ENCODE measurements at regions of chr1 and their contacts with region 1.

Region 1: DNA sequence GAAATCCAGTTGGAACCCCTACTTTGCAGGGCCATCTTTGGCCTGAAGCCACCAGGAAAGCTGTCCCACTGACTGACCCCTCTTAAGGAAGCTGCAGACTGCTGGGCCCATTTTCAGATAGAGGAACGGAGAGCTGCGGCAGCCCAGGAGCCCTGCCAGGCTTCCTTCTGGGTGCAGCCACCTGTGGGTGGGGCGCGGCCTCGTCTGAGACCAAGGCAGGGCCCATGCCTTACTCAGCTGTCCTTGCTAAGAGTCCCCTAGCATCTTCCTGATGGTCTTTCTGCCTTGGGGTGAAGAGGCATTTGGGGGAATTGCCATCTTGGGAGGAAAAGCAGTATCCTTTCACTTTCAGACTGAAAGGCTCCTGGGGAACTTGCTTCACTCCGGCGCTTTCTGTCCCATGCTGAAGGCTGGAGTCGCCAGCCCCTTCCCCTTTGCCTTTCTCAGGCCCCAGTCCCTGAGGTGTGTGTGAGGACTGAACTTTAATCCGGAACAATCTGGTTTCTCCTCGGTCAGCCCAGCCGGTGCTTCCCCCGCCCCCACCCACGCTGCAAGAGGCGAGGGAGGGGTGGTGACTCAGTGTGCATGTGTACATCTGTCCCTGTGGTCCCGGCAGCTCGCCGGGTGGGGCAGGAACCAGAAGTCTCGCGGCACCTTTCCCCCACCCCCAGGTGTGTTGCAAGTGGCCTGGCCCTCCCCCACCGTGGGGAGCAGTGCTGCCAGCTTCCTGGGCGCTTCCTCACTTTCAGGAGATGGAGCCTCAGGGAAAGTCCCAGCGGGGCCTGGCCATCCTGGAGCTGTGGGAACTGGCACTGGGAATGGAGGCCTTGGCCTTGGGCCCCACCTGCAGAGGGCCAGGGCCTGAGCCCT is 5.1 kb downstream of the ZC3H12A start:
- DNase-seq: peak; percentile 79
- ATAC-seq: peak; percentile 50
- H3K4me3 ChIP-seq: peak overlapping the region; percentile 94 to 99 (median 98)
- H3K4me3 Mint-ChIP-seq: peak overlapping the region; percentile 100
- H3K27ac ChIP-seq: peak overlapping the region; percentile 96 to 97
- H3K27ac Mint-ChIP-seq: peak overlapping the region; percentile 98
- H3K4me1 ChIP-seq: peaks cover 32 to 66% of the 10 kb centered on the region in 2 donors
- H3K4me1 Mint-ChIP-seq: peaks cover 60% of the 10 kb centered on the region
- H3K27me3 ChIP-seq: no peaks in the 10 kb centered on the region
- H3K27me3 Mint-ChIP-seq: no peaks in the 10 kb centered on the region
- CTCF ChIP-seq: no peak

Region 2: DNA sequence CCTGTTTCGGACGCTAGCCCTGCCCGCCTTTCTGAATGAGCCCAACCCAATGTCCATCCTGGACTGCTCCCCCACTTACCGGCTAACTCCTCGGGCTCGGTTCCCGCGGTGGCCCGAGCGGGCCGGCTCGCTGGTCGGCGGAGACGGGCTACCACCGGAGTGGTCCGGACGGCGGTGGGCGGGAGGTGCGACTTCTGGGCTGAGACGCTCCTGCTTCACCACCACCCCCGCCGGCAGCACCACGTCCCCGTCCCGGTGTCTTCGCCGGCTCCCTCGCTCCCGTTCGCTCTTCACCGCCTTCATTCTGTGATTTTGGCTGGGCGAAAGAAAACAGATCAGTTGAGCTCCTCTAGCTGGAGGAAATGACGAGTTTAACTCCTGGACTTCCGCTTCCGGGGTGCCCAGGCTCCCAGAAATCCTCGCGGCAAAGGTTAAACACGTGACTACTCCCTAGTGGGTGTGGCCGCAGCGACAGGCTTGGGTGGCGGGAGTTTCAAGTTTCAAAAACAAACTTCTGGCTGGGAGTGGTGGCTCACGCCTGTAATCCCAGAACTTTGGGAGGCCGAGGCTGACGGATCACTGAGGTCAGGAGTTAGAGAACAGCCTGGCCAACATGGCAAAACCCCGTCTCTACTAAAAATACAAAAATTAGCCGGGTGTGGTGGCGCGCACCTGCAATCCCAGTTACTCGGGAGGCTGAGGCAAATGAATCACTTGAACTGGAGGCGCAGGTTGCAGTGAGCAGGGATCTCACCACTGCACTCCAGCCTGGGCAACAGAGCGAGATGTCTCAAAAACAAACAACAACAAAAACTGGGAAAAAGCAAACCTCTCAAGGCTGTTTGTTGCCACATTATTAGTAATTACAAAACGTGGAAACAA is 74.7 kb after region 1 on chr1 and contains the start of gene SNIP1:
- CTCF ChIA-PET with region 1: no interaction called
- POLR2A ChIA-PET with region 1: no interaction called
- intact Hi-C with region 1: loop called (anchors 1 kb)
- DNase-seq: peak; percentile 94
- ATAC-seq: peak; percentile 98
- H3K4me3 ChIP-seq: peak within 1 kb of the TSS; percentile 75 to 99 (median 93)
- H3K4me3 Mint-ChIP-seq: peak within 1 kb of the TSS; percentile 98
- H3K27ac ChIP-seq: peak within 1 kb of the TSS; percentile 82 to 96
- H3K27ac Mint-ChIP-seq: peak within 1 kb of the TSS; percentile 97
- H3K4me1 ChIP-seq: peaks cover 13 to 19% of the 10 kb centered on the region in 2 donors
- H3K4me1 Mint-ChIP-seq: peaks cover 33% of the 10 kb centered on the region
- H3K27me3 ChIP-seq: peaks cover 0 to 3% (median 0%) of the 10 kb centered on the region in 4 experiments
- H3K27me3 Mint-ChIP-seq: peaks cover 5% of the 10 kb centered on the region
- CTCF ChIP-seq: no peak
- total RNA-seq, gene SNIP1: 45.0 and 45.1 TPM in 2 replicates

Region 3: DNA sequence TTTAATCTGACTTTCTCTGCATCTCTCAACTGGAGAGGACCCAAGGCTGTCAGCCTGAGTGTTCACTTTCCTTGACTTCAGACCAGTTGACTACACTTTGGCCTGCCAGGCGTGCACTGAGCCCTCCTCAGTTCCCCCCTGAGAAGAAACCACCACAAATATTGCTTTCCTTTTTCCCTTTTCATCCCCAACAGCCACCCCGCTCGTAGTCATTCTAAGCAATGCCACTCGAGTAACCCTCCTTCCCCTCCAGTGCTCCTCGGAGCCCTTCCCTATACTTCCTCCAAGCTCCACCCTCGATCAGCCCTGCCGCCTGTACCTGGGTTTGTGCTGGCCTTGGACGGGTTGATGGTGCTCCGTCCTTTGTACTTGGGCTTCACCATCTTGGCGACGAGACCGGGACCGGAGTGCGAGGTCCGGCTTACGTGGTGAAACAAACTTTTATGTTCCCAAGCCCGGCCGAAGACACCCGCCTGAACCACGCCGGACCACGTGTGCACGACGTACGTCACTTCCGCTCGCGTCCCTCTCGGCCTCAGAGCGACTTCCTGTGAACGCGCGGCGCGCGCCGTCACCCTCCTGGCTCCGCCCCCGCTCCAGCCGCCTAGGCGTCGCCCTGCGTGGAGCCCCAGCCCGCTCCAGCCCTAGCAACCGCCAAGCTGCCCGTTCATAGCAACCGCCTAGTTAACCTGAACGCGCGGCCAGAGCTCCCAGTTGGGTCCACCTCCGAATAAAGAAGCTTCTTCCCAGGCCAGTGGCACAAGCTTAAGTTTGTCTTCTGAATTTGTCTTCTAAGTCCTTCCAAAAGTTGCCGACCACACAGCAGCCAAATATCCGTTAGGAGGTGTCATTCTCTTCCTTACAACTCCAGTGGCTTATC is 116.2 kb after region 1 on chr1 and contains the start of gene GNL2:
- CTCF ChIA-PET with region 1: no interaction called
- POLR2A ChIA-PET with region 1: no interaction called
- intact Hi-C with region 1: loop called (anchors 5 kb)
- DNase-seq: peak; percentile 99
- ATAC-seq: peak; percentile 98
- H3K4me3 ChIP-seq: peak within 1 kb of the TSS; percentile 67 to 96 (median 92)
- H3K4me3 Mint-ChIP-seq: peak within 1 kb of the TSS; percentile 99
- H3K27ac ChIP-seq: peak within 1 kb of the TSS; percentile 77 to 90
- H3K27ac Mint-ChIP-seq: peak within 1 kb of the TSS; percentile 93
- H3K4me1 ChIP-seq: peaks cover 16 to 20% of the 10 kb centered on the region in 2 donors
- H3K4me1 Mint-ChIP-seq: peaks cover 26% of the 10 kb centered on the region
- H3K27me3 ChIP-seq: peaks cover 0 to 3% (median 0%) of the 10 kb centered on the region in 4 experiments
- H3K27me3 Mint-ChIP-seq: no peaks in the 10 kb centered on the region
- CTCF ChIP-seq: no peak
- total RNA-seq, gene GNL2: 44.0 and 50.6 TPM in 2 replicates

Region 4: DNA sequence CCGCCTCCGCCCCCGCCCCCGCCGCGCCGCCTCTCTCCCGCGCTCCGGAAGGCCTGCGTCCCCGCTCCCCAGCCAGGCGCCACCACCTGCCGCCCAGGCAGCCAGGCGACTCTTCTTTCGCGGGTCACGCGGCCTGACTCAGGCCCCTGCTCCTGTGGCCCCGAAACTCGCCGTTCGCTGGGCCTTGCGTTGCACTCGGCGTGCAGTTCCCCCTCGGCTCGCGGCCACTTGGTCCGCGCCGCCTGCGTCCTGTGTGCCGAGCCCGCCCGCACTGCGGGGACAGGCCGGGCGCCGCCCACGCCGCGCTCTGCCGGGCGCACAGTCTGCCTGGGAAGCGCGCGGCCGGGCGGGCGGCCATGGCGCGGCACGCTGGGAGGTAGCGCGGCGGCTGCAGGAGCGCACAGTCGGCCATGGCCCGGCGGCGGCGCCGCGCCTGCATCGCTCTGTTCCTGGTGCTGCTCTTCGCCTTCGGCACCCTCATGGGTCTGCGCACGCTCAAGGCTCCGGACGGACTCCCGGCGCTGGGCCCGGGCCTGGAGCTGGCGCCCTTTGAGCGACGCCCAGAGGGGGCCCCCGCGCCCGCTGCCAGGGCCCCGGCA is 314.4 kb after region 1 on chr1 and contains the start of gene MANEAL:
- CTCF ChIA-PET with region 1: no interaction called
- POLR2A ChIA-PET with region 1: no interaction called
- intact Hi-C with region 1: no loop called
- DNase-seq: peak; percentile 71
- ATAC-seq: peak; percentile 90
- H3K4me3 ChIP-seq: peak within 1 kb of the TSS in 4 of 5 experiments; percentile 40 to 66 (median 62)
- H3K4me3 Mint-ChIP-seq: peak within 1 kb of the TSS; percentile 85
- H3K27ac ChIP-seq: no peak within 1 kb of the TSS
- H3K27ac Mint-ChIP-seq: peak within 1 kb of the TSS; percentile 53
- H3K4me1 ChIP-seq: peaks cover 15 to 18% of the 10 kb centered on the region in 2 donors
- H3K4me1 Mint-ChIP-seq: peaks cover 18% of the 10 kb centered on the region
- H3K27me3 ChIP-seq: peaks cover 0 to 17% (median 1%) of the 10 kb centered on the region in 4 experiments
- H3K27me3 Mint-ChIP-seq: peaks cover 12% of the 10 kb centered on the region
- CTCF ChIP-seq: no peak
- total RNA-seq, gene MANEAL: 6.6 and 7.8 TPM in 2 replicates

Measured in B cell (primary cell).